Gastrocnemius medialis (tissue), 4 donors: ENCODE measurements at regions of chr1 and their contacts with region 1.

Region 1: DNA sequence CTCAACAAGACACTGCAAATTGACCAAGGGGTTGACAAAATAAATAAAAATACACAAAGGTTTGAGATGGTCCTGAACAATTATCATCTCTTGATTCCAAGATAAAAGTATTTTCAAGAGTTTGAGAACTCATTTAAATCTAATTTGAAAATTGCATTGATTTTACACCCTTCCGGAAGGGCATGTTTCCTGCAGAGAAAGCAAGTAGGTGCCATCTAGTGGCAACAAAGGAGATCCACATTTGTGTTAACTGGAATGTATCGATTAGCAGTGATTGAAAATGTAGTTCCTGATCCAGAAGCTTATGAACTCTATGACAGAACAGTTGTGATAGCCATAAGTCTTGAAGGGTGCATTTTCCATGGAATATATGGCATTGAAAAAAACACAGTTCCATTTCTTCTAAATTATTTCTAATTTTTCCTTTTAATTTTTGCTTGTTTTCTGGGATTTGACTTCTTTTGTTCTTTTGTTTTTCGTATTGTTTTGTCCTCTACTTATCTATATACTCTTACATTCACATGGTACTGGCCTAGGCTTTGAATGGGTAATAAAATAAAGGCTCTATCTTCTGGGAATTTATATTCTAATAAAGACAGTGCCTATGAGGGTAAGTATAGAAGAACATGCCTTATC is 143.7 kb downstream of the DNM3 start:
- DNase-seq: no peak
- ATAC-seq: peak in 1 of 2 donors; percentile 39
- H3K4me3 ChIP-seq: no peak overlapping the region
- H3K27ac ChIP-seq: no peak overlapping the region
- H3K4me1 ChIP-seq: peaks cover 0 to 7% of the 10 kb centered on the region in 2 donors
- H3K27me3 ChIP-seq: no peaks in the 10 kb centered on the region
- CTCF ChIP-seq: peak; percentile 50 to 71 (median 65)
- POLR2A ChIP-seq: no peak

Region 2: DNA sequence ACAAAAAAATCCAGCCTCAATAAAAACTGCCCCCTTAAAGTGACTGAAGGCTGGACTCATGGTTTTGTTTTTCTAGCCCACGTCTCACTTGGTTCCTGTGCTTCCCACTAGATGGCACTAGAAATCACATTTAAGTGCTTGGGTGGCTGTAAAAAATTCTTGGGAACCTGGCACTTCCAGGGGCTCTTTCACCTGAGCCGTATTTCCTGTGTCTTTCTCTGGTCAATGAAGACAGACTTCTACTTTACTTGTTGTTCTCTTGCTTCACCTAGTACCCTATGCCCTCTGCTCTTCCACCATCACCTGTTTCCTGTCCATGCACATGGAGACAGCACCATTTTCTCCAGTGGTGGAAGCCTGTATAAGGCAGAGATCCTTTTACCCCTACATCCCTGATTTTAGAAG is 183.5 kb before region 1 on chr1:
- in situ Hi-C with region 1: loop called in 3 of 4 experiments (anchors 5 kb)
- intact Hi-C with region 1: loop called (anchors 1 kb)
- DNase-seq: no peak
- ATAC-seq: peak in 1 of 2 donors; percentile 59
- H3K4me3 ChIP-seq: no peak overlapping the region
- H3K27ac ChIP-seq: no peak overlapping the region
- H3K4me1 ChIP-seq: peaks cover 0 to 3% of the 10 kb centered on the region in 2 donors
- H3K27me3 ChIP-seq: no peaks in the 10 kb centered on the region
- CTCF ChIP-seq: peak; percentile 67 to 76 (median 72)
- POLR2A ChIP-seq: no peak

Region 3: GRCh38 chr1:171814692-171815091 is 170.3 kb before region 1 on chr1:
- in situ Hi-C with region 1: loop called in 3 of 4 experiments (anchors 5 kb)
- intact Hi-C with region 1: no loop called
- DNase-seq: no peak
- ATAC-seq: no peak
- H3K4me3 ChIP-seq: no peak overlapping the region
- H3K27ac ChIP-seq: no peak overlapping the region
- H3K4me1 ChIP-seq: no peaks in the 10 kb centered on the region
- H3K27me3 ChIP-seq: no peaks in the 10 kb centered on the region
- CTCF ChIP-seq: no peak
- POLR2A ChIP-seq: no peak

Region 4: GRCh38 chr1:172069534-172069933 is 84.6 kb after region 1 on chr1:
- in situ Hi-C with region 1: no loop called
- intact Hi-C with region 1: no loop called
- DNase-seq: no peak
- ATAC-seq: peak in 1 of 2 donors; percentile 52
- H3K4me3 ChIP-seq: no peak overlapping the region
- H3K27ac ChIP-seq: peak overlapping the region in 1 of 4 donors; percentile 9
- H3K4me1 ChIP-seq: no peaks in the 10 kb centered on the region
- H3K27me3 ChIP-seq: no peaks in the 10 kb centered on the region
- CTCF ChIP-seq: no peak
- POLR2A ChIP-seq: no peak

Region 5: GRCh38 chr1:172201572-172201971 is 216.6 kb after region 1 on chr1:
- in situ Hi-C with region 1: no loop called
- intact Hi-C with region 1: no loop called
- DNase-seq: no peak
- ATAC-seq: no peak
- H3K4me3 ChIP-seq: no peak overlapping the region
- H3K27ac ChIP-seq: no peak overlapping the region
- H3K4me1 ChIP-seq: no peaks in the 10 kb centered on the region
- H3K27me3 ChIP-seq: no peaks in the 10 kb centered on the region
- CTCF ChIP-seq: no peak
- POLR2A ChIP-seq: no peak

Region 6: DNA sequence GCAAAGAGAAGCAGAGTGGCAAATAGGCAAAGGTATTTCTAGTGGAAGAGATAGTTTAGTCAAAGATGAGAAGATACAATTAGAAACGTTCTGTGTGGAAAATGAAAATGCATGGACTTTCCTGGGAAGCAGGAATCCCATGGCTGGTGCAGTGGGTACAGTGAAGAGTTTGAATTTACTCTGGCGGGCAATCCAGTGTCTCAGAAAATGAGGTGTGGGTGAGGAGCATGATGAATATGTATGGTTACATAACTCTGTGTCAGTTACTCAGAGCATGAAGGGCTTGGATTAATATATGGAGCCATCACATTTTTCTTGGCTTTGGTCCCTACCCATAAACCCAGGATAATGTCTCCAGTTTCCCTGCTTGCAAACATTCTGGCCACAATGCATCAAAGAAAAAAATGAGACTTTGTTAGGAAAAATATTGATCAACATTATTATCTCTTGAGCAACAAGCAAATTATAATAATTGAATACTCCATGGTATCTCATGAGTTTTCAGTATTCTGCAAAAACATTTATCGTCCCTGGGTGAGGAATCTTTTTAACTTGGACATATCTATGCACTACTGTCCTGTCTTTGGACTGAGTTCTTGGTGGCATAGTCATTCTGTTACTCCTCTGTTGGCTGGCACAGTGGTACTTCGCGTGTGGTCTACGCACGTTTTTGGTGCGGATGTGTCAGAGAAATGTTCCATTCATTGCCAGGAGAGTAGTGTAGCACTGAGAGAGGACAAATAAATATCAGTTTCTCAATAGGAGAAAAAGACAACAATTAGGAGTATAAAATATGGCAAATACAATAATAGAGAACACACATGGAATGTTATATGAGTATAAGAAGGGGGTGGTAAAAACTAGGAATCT is 261.8 kb after region 1 on chr1:
- in situ Hi-C with region 1: no loop called
- intact Hi-C with region 1: no loop called
- DNase-seq: no peak
- ATAC-seq: no peak
- H3K4me3 ChIP-seq: no peak overlapping the region
- H3K27ac ChIP-seq: no peak overlapping the region
- H3K4me1 ChIP-seq: no peaks in the 10 kb centered on the region
- H3K27me3 ChIP-seq: no peaks in the 10 kb centered on the region
- CTCF ChIP-seq: no peak
- POLR2A ChIP-seq: no peak

Region 7: DNA sequence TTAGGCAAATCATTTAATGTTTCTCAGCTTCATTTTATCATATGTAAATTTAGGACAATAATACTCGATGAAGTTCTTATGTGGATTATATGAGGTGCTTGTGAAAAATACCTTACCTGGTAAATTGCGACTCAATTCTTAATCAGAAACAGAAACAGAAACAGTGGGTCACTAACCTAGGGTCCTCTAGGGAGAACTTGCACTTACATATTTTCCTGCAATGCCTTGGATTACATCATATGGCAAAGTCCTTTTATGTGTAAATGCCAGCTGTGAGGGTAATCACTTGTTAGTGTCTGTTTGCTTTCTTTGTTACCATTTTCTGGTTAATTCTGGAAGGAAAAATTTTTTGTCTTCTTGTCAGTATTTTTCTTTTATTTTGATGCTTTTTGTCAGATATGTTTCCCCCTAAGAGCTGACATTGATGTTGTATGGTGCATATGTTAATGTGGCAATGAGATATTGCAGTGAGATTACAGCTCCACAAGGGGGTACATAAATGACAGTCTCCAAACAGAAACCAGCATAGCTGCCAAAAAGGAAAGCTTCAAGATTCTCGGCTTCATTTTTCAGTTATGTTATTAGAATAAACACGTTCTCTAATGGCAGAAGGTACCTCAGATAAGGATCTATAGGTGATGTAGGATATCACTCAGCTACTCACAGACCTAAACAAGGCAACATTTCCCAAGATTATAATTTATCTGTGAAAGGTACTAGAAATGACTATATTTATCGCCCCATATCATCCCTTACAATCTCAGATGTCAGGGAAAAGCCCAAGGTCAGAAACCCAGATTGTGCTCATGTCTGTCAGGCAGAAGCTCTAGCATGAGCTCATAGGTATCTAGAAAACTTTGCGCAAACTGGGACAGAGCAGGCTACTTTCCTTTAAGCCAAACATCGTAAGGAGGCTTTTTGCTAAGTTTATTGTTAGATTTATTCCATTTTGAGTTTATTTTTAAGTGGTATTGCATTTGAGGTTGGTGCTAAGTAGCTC is 793.8 kb after region 1 on chr1:
- in situ Hi-C with region 1: no loop called
- intact Hi-C with region 1: no loop called
- DNase-seq: no peak
- ATAC-seq: no peak
- H3K4me3 ChIP-seq: no peak overlapping the region
- H3K27ac ChIP-seq: no peak overlapping the region
- H3K4me1 ChIP-seq: no peaks in the 10 kb centered on the region
- H3K27me3 ChIP-seq: no peaks in the 10 kb centered on the region
- CTCF ChIP-seq: no peak
- POLR2A ChIP-seq: no peak